ENCODE measurements at regions of chr5 and their contacts with region 1.

Region 1: GRCh38 chr5:154647114-154647760 is 107.9 kb upstream of the LARP1 start:
- DNase-seq: no peak
- H3K4me3 ChIP-seq: no peak overlapping the region
- H3K27ac ChIP-seq: no peak overlapping the region
- H3K4me1 ChIP-seq: no peaks in the 10 kb centered on the region
- H3K27me3 ChIP-seq: no peaks in the 10 kb centered on the region
- CTCF ChIP-seq: no peak

Region 2: GRCh38 chr5:154568589-154568988 is 78.6 kb before region 1 on chr5:
- CTCF ChIA-PET with region 1: no interaction called
- POLR2A ChIA-PET with region 1: no interaction called
- intact Hi-C with region 1: no loop called
- DNase-seq: no peak
- H3K4me3 ChIP-seq: no peak overlapping the region
- H3K27ac ChIP-seq: no peak overlapping the region
- H3K4me1 ChIP-seq: no peaks in the 10 kb centered on the region
- H3K27me3 ChIP-seq: no peaks in the 10 kb centered on the region
- CTCF ChIP-seq: no peak

Region 3: GRCh38 chr5:154754460-154755360 is 107.5 kb after region 1 on chr5:
- CTCF ChIA-PET with region 1: no interaction called
- POLR2A ChIA-PET with region 1: no interaction called
- intact Hi-C with region 1: loop called (anchors 2 kb)
- DNase-seq: peak; percentile 99
- H3K4me3 ChIP-seq: peak overlapping the region; percentile 96
- H3K27ac ChIP-seq: peak overlapping the region; percentile 98
- H3K4me1 ChIP-seq: peaks cover 25% of the 10 kb centered on the region
- H3K27me3 ChIP-seq: no peaks in the 10 kb centered on the region
- CTCF ChIP-seq: peak; percentile 48; the same call in 1 of the 2 replicates

Region 4: DNA sequence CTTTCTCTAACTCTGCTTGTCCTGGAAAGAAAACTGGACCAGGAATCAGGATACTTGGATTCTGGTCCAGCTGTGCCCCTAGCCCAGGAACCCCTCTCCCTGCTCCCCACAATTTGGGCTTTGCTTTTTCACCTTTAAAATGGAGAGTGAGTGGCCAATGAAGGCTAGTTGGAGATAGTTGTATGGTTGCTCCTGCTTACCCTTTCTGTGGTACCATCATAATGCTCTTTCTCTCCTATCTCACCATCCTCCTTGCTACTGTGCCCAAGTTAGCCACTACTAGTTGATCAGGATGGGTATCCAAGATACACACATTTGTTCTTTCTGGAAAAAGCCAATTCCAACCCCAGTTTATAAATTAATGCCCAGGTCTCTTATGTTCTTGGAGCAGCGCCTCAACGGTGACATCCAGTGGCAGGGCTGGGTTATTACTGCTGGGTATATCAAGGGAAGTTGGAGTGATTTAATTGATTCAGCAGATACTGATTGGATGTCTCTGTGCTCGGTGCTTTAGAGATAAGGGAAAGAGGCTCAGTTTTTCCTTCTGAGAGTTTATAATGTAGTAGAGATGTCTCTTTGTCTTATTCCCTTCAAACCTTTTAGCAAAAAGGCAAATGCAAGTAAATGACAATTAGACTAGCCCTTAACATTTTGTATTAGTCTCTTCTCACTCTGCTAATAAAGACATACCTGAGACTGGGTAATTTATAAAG is 164.6 kb after region 1 on chr5:
- CTCF ChIA-PET with region 1: interaction called, 4 read pairs
- POLR2A ChIA-PET with region 1: no interaction called
- intact Hi-C with region 1: loop called (anchors 1 kb)
- DNase-seq: peak; percentile 61
- H3K4me3 ChIP-seq: no peak overlapping the region
- H3K27ac ChIP-seq: no peak overlapping the region
- H3K4me1 ChIP-seq: no peaks in the 10 kb centered on the region
- H3K27me3 ChIP-seq: no peaks in the 10 kb centered on the region
- CTCF ChIP-seq: peak; percentile 80

Region 5: DNA sequence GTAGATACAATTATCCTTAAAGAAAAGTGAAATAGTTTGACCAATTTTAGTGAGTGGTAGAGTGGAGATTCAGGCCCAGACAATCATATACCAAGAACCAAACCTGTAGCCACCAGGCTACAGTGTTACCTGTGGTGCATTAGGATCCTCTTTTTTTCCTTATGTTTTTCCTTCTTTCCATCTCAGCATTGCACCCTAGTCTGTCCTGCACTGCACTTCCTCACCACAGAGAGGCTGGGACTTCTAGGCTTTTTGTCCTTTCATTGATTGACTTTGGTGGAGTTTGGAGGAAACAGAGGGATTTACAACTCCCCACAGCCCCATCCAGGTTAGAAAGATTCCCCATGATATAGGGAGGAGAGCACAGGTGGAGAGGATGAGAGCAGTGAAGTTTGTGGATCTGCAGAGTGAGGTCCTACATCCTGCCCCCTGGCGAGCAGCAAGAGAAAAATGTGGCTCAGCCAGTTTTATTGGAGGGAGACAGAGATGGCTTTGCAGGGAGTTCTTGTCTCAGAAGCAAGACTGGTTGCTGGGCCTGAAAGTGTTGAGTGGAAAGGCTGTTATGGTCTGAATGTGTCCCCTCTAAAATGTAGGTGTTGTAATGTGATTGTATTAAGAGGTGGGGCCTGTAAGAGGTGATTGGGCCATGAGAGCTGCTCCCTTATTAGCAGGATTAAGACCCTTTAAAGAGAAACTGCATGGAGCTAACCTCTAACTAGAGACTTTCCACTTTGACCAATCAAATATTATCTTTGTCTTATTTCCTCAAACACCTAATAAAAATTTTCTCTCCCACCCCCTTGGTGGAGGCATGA is 402.5 kb after region 1 on chr5:
- CTCF ChIA-PET with region 1: interaction called, 5 read pairs
- POLR2A ChIA-PET with region 1: no interaction called
- intact Hi-C with region 1: loop called (anchors 5 kb)
- DNase-seq: peak; percentile 89
- H3K4me3 ChIP-seq: no peak overlapping the region
- H3K27ac ChIP-seq: peak overlapping the region; percentile 93
- H3K4me1 ChIP-seq: peaks cover 68% of the 10 kb centered on the region
- H3K27me3 ChIP-seq: no peaks in the 10 kb centered on the region
- CTCF ChIP-seq: peak; percentile 68

Region 6: GRCh38 chr5:155136216-155136850 is 489.1 kb after region 1 on chr5:
- CTCF ChIA-PET with region 1: no interaction called
- POLR2A ChIA-PET with region 1: no interaction called
- intact Hi-C with region 1: loop called (anchors 10 kb)
- DNase-seq: no peak
- H3K4me3 ChIP-seq: no peak overlapping the region
- H3K27ac ChIP-seq: no peak overlapping the region
- H3K4me1 ChIP-seq: no peaks in the 10 kb centered on the region
- H3K27me3 ChIP-seq: no peaks in the 10 kb centered on the region
- CTCF ChIP-seq: no peak